Ovary (tissue), 10 donors: ENCODE measurements at regions of chr18 and their contacts with region 1.

Region 1: DNA sequence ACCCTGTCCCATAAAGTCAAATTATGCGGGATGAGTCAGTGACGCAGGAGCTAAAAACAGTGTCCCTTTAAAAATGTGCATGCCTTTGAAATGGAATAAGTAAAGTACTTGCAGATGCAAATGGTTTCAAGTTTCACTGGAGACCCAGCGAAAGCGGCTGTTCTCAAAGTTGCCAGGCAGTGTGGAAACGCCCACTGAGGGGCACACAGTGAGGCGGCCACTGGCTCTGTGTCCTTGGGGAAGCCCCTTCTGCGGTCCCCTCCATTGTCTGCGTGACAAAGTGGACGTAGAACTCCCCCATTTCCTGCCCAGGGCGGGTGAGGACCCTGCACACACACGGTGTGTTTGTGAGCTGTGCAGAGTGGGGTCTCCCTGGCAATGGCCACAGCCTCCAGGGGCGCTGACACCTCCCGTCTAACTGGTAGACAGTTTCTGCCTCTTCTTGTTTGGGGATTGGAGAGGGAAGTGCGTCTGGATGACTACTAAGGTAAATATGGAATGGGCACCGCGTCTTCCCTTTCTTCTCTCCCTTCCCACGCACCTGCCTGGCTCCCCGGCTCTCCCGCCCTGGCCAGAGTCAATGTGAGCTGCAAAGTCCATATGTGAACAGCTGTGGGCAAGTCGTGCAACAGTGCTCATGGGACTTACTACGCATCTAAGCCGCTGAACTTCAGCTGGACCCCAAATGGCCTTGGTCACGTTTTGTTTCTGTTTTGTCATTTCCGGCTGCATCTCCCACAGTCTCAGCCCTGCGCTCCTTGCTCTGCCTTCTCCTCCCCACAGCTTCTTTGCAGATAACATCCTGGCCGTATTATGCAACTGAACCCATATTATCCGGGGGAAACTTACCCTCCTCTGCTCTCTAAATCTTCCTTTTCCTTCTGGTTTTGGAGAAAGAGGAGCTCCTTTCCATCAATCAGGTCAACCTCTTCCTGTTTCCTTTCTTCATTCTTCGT is 33.7 kb upstream of the ZNF516 start:
- DNase-seq: peak; percentile 82 to 87 (median 82)
- H3K4me3 ChIP-seq: peak overlapping the region; percentile 49
- H3K27ac ChIP-seq: peak overlapping the region; percentile 24 to 98
- H3K4me1 ChIP-seq: peaks cover 2% of the 10 kb centered on the region
- H3K27me3 ChIP-seq: no peaks in the 10 kb centered on the region
- CTCF ChIP-seq: peak in 1 of 3 donors; percentile 12
- EP300 ChIP-seq: no peak
- POLR2A ChIP-seq: peak; percentile 91

Region 2: GRCh38 chr18:75521812-75522211 is 1006.9 kb before region 1 on chr18:
- intact Hi-C with region 1: no loop called
- DNase-seq: no peak
- H3K4me3 ChIP-seq: no peak overlapping the region
- H3K27ac ChIP-seq: no peak overlapping the region
- H3K4me1 ChIP-seq: no peaks in the 10 kb centered on the region
- H3K27me3 ChIP-seq: no peaks in the 10 kb centered on the region
- CTCF ChIP-seq: no peak
- EP300 ChIP-seq: no peak
- POLR2A ChIP-seq: no peak

Region 3: GRCh38 chr18:76212960-76213359 is 315.8 kb before region 1 on chr18:
- intact Hi-C with region 1: no loop called
- DNase-seq: no peak
- H3K4me3 ChIP-seq: no peak overlapping the region
- H3K27ac ChIP-seq: no peak overlapping the region
- H3K4me1 ChIP-seq: peaks cover 8% of the 10 kb centered on the region
- H3K27me3 ChIP-seq: no peaks in the 10 kb centered on the region
- CTCF ChIP-seq: no peak
- EP300 ChIP-seq: no peak
- POLR2A ChIP-seq: no peak

Region 4: DNA sequence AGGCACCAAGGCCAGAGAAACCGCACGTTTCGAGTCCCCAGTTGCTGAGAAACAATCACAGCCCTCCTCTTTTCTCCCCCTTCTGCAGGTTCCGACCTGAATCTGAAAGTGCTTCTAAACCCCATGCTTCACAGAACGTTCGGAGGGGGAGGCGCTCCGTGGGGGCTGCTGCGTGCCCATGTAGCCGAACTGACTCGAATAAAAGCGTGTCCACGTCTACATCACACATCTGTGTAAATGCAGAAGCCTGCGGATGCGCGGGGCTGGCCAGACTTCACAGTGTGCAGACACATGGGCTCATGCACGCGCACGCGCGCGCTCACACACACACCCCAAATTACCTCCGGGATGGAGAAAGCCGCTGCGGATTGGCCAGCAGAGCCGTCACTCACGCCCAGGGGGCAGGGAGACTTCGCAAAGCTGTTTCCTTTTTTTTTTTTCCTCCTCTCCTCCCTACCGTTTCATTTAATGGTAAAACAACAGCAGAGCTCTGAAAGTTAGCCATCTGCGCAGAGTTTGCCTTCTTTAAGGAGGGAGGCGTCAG is 36.0 kb before region 1 on chr18:
- intact Hi-C with region 1: loop called in 1 of 4 experiments (anchors 5 kb)
- DNase-seq: peak; percentile 100
- H3K4me3 ChIP-seq: peak overlapping the region; percentile 70
- H3K27ac ChIP-seq: peak overlapping the region; percentile 80 to 89
- H3K4me1 ChIP-seq: peaks cover 2% of the 10 kb centered on the region
- H3K27me3 ChIP-seq: no peaks in the 10 kb centered on the region
- CTCF ChIP-seq: peak in 1 of 3 donors; percentile 10
- EP300 ChIP-seq: no peak
- POLR2A ChIP-seq: peak; percentile 62

Region 5: DNA sequence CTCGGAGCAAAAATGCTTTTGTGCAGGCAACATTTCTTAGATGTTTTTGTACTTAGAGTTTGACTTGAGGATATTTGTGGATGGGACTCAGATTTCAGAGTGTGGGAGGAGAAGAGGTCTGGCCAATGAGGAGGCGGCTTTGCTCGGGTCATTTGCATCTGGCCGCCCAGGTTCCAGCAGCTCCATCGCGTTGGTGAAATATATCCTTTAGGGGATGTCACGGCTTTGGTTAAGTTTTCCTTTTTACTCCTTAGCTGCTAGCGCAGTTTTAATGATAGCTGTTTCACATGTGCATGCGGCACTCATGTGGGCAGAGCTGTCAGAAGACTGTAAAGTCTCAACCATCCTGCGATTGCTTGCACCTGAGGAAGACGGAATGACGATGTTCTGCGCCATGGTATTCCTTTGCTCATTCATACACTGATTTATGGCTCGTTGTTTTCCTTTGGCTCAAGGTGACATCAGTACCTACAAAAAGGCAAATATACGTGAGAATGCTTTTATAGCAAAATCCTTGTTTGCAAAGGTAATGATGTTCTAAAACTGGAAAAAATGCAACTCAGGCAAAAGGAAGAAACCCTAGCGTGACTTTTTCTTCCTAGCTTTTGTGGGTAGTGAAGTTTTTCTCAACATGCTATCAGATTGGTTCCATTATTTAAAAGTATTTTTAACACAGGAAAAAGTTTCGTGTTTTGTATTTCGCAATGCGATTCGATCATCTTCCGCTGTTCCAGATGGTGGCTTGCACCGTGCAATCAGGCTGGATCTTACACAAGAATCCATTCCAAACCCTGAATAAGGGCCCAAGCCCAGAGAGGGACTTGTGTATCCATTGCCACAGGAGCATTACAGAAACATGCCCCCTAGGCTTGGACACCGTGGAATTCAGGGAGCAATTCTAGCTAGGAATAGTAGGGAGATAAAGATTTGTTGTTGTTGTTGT is 36.8 kb after region 1 on chr18:
- intact Hi-C with region 1: loop called in 1 of 4 experiments (anchors 5 kb)
- DNase-seq: peak; percentile 75 to 81 (median 76)
- H3K4me3 ChIP-seq: peak overlapping the region; percentile 44
- H3K27ac ChIP-seq: peak overlapping the region in 1 of 2 donors; percentile 63
- H3K4me1 ChIP-seq: peaks cover 5% of the 10 kb centered on the region
- H3K27me3 ChIP-seq: no peaks in the 10 kb centered on the region
- CTCF ChIP-seq: no peak
- EP300 ChIP-seq: no peak
- POLR2A ChIP-seq: peak; percentile 54